Dendritic cell treated with granulocyte-macrophage colony-stimulating factor and Interleukin-4, amounts not matched to agents 40 ng/mL and 50 ng/mL, for 4 days (primary cell): ENCODE measurements at regions of chr18 and their contacts with region 1.

Region 1: GRCh38 chr18:28684746-28685355 is 507.9 kb upstream of the CDH2 start:
- H3K4me3 Mint-ChIP-seq: no peak overlapping the region
- H3K27ac Mint-ChIP-seq: no peak overlapping the region
- H3K4me1 Mint-ChIP-seq: no peaks in the 10 kb centered on the region
- H3K27me3 Mint-ChIP-seq: no peaks in the 10 kb centered on the region

Region 2: DNA sequence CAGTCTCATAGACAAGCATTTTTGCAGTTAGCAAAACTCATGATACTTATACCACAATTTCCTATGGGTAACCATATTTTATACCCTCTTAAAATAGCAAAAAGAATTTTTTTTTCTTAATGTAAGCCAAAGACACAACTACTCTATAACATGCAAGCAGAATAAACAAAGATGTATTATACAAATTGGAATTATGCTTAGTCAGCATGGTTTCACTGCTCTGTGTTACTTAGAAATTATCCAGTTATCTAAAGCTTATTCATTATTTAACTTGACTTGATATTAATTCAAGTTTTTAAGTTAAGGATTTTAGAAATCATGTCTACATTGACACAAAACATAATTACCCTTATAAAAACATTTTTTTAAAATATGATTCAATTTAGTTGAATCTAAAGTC is 58.1 kb before region 1 on chr18:
- intact Hi-C with region 1: loop called (anchors 10 kb)
- H3K4me3 Mint-ChIP-seq: no peak overlapping the region
- H3K27ac Mint-ChIP-seq: no peak overlapping the region
- H3K4me1 Mint-ChIP-seq: no peaks in the 10 kb centered on the region
- H3K27me3 Mint-ChIP-seq: no peaks in the 10 kb centered on the region